Sigmoid colon (tissue), 7 donors: ENCODE measurements at regions of chr1 and their contacts with region 1.

Region 1: GRCh38 chr1:33219881-33220661 is 36.2 kb upstream of the ZNF362 start:
- DNase-seq: no peak
- H3K4me3 ChIP-seq: no peak overlapping the region
- H3K27ac ChIP-seq: no peak overlapping the region
- H3K4me1 ChIP-seq: no peaks in the 10 kb centered on the region
- H3K27me3 ChIP-seq: no peaks in the 10 kb centered on the region
- CTCF ChIP-seq: no peak
- EP300 ChIP-seq: no peak
- POLR2A ChIP-seq: no peak

Region 2: DNA sequence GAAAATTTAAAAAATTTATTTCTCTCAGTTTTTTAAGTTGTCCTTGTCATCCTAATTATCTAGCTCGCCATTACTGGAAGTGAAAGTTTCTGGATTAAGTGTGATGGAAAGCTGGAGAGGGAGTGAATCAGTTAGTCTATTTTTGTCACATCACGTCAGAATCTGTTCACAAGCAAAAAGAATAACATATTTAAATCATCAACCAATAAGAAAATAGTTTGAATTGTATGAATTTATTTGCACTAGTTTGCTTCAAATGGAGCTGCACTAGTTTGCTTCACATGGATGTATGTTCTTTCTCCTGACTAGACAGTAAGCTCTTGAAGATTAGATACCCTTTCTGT is 188.0 kb after region 1 on chr1:
- intact Hi-C with region 1: no loop called
- DNase-seq: no peak
- H3K4me3 ChIP-seq: no peak overlapping the region
- H3K27ac ChIP-seq: no peak overlapping the region
- H3K4me1 ChIP-seq: peaks cover 0 to 14% (median 13%) of the 10 kb centered on the region in 4 donors
- H3K27me3 ChIP-seq: no peaks in the 10 kb centered on the region
- CTCF ChIP-seq: no peak
- EP300 ChIP-seq: no peak
- POLR2A ChIP-seq: no peak

Region 3: DNA sequence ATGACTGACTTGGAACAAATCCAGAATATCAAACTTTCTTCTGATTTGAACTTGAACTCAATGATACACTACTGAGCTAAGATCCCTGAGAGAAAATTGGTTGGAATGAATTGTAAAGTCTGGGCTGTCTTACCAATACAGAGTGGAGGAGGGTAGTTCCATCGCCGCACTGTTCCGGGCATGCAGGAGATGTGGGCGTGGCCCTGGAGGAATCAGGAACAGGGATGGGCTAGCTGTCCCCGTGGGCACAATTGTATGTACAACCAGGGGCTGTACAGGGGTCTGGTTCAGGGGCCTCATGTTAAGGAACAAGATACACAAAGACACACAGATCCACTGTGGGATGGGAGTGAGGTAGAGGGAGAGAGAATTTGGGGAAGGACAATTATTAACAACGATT is 396.7 kb after region 1 on chr1:
- intact Hi-C with region 1: loop called (anchors 10 kb)
- DNase-seq: no peak
- H3K4me3 ChIP-seq: no peak overlapping the region
- H3K27ac ChIP-seq: no peak overlapping the region
- H3K4me1 ChIP-seq: no peaks in the 10 kb centered on the region
- H3K27me3 ChIP-seq: peaks cover 0 to 17% (median 0%) of the 10 kb centered on the region in 3 donors
- CTCF ChIP-seq: no peak
- EP300 ChIP-seq: no peak
- POLR2A ChIP-seq: no peak